Heart right ventricle (tissue), 16 donors: ENCODE measurements at regions of chr11 and their contacts with region 1.

Region 1: GRCh38 chr11:115905341-115906000 is 401.3 kb upstream of the CADM1 start:
- DNase-seq: no peak
- ATAC-seq: no peak
- H3K4me3 ChIP-seq: no peak overlapping the region
- H3K27ac ChIP-seq: no peak overlapping the region
- H3K4me1 ChIP-seq: peaks cover 0 to 9% (median 0%) of the 10 kb centered on the region in 9 donors
- H3K27me3 ChIP-seq: peaks cover 0 to 13% (median 0%) of the 10 kb centered on the region in 7 donors
- CTCF ChIP-seq: no peak

Region 2: GRCh38 chr11:115959081-115959486 is 53.6 kb after region 1 on chr11:
- intact Hi-C with region 1: loop called in 2 of 10 experiments (anchors 5 to 10 kb)
- DNase-seq: no peak
- ATAC-seq: no peak
- H3K4me3 ChIP-seq: no peak overlapping the region
- H3K27ac ChIP-seq: no peak overlapping the region
- H3K4me1 ChIP-seq: peaks cover 0 to 34% (median 12%) of the 10 kb centered on the region in 9 donors
- H3K27me3 ChIP-seq: peaks cover 0 to 24% (median 0%) of the 10 kb centered on the region in 7 donors
- CTCF ChIP-seq: no peak

Region 3: DNA sequence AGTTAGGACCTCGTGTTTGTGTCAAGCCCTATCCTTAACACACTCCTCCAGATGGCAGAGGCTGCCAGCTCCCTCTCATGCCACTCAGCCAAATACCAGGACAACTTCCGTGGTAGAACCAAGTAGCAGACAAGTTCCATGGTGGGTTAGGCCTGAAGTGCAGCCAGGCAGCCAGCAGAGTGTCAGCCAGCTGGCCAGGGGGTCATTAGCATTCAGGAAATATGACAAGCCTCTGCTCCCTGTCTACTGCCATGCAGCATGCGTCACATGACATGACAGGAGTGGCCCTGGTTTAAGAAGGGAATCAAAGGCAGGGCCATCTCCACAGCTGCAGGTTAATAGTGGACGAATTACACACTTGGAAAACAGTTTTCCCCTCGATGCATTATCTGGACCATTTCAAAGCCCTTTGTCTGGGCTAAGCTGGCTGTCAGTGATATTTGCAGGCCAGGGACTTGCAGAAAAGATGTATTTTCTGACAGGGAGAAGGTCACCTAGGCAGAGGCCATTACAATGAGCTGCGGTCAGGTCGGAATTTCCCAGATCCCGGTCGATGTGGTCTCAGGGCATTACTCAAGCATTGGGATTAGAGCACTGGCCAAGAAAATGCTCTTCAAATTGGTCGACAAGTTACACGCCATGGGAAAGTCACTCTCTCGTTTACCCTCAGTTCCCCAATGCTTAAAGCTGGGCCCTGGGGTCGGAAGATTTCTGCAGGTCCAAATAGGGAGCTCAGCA is 60.5 kb after region 1 on chr11:
- intact Hi-C with region 1: loop called in 1 of 10 experiments (anchors 10 kb)
- DNase-seq: peak in 1 of 2 donors; percentile 37
- ATAC-seq: peak in 7 of 8 donors; percentile 51 to 90 (median 76)
- H3K4me3 ChIP-seq: no peak overlapping the region
- H3K27ac ChIP-seq: peak overlapping the region in 1 of 10 donors; percentile 18
- H3K4me1 ChIP-seq: peaks cover 3 to 39% (median 13%) of the 10 kb centered on the region in 9 donors
- H3K27me3 ChIP-seq: peaks cover 0 to 8% (median 0%) of the 10 kb centered on the region in 7 donors
- CTCF ChIP-seq: no peak